OCI-LY7 (cell line): ENCODE measurements at regions of chr7 and their contacts with region 1.

Region 1: GRCh38 chr7:87506246-87507180 is 31.0 kb upstream of the ABCB4 start:
- DNase-seq: no peak
- H3K4me3 ChIP-seq: no peak overlapping the region
- H3K27ac ChIP-seq: no peak overlapping the region
- H3K4me1 ChIP-seq: no peaks in the 10 kb centered on the region
- CTCF ChIP-seq: peak; percentile 67

Region 2: DNA sequence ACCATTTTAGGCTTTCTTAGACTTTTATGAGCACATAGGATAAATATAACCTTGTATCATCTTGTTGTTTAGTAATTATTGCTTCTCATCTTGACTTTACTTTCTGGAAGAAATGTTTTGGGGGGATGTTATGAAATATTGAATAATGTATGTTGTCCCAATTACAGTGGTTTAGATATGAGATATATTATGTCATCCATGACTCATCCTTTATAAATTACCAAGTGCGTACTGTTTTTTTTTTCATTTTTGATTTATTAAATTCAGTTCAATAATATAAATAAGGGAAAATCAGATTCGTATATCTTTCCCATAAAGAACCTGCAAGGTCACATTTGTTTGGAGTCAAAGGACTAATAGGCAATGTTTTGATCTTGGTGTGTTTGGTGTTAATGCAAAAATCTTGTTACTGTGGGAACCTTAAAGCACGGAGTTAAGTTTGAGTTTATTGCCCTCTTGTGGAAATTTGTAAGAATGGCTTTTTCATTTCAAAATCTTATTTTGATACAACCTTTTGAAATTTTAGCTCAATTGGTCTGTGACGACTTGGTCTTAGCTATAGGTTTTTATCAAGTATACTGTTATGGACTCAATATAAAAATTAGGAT is 604.7 kb after region 1 on chr7:
- CTCF ChIA-PET with region 1: no interaction called
- POLR2A ChIA-PET with region 1: no interaction called
- intact Hi-C with region 1: loop called (anchors 5 kb)
- DNase-seq: peak; percentile 49
- H3K4me3 ChIP-seq: no peak overlapping the region
- H3K27ac ChIP-seq: no peak overlapping the region
- H3K4me1 ChIP-seq: no peaks in the 10 kb centered on the region
- CTCF ChIP-seq: peak; percentile 83